Activated CD8-positive, alpha-beta memory T cell treated with anti-CD3 and anti-CD28 coated beads, Interleukin-2, amount 10 ng/mL, durations not matched to agents 7 days and 5 days (primary cell): ENCODE measurements at regions of chr11 and their contacts with region 1.

Region 1: DNA sequence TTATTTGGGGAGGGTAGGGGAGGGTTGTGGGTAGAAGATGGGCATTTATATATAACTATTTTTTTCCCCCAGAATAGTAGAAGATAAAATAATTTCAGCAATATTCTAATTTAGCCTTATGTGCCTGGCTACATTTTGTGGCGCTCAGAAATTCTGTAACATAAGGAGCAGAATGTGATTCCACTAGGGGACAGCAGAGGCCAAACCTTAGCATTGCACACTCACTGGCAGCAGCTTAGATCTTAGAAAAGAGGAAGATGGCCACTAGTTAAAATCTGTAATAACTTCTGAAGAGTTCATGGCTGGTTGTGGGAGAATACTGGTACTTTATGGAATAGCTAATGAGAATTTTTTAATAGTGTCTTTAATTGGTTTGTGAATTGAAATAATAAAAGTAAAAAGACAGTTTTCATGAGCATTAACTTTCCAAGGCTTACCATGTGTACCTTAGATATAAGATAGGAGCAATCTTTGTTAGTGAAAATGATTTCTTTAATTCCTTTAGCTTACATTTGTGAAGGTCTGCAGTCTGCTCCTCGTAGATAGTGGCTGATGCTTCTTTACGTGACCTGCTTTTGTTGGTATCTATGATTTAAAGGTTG is 33.1 kb downstream of the DDX10 start:
- DNase-seq: peak; percentile 61
- ATAC-seq: peak; percentile 71
- H3K4me3 Mint-ChIP-seq: no peak overlapping the region
- H3K27ac Mint-ChIP-seq: no peak overlapping the region
- H3K4me1 Mint-ChIP-seq: peaks cover 6% of the 10 kb centered on the region
- H3K27me3 Mint-ChIP-seq: no peaks in the 10 kb centered on the region

Region 2: DNA sequence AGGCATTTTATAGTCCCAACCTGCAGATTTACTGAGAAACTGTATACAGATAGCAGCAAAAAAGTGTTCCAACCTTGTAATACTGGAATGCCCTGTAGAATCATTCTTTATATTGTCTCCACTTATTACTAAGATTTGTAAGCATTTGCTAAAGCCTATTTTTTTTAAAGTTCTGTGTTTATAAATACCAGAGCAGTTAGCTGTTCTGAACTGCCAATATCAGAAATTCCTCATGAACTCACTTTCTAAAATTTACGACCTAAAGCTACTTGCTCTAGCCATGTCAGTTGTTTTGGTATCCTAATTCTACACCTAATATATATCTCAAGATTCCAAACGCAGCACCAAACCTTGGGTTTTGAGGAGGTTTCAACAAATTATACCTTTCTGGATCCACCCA is 333.8 kb before region 1 on chr11:
- CTCF ChIA-PET with region 1: no interaction called
- DNase-seq: no peak
- ATAC-seq: no peak
- H3K4me3 Mint-ChIP-seq: no peak overlapping the region
- H3K27ac Mint-ChIP-seq: no peak overlapping the region
- H3K4me1 Mint-ChIP-seq: no peaks in the 10 kb centered on the region
- H3K27me3 Mint-ChIP-seq: no peaks in the 10 kb centered on the region

Region 3: GRCh38 chr11:108733479-108734116 is 35.6 kb after region 1 on chr11:
- CTCF ChIA-PET with region 1: interaction called, 16 read pairs
- DNase-seq: peak; percentile 61
- ATAC-seq: peak; percentile 91
- H3K4me3 Mint-ChIP-seq: peak overlapping the region; percentile 48
- H3K27ac Mint-ChIP-seq: peak overlapping the region; percentile 74
- H3K4me1 Mint-ChIP-seq: peaks cover 43% of the 10 kb centered on the region
- H3K27me3 Mint-ChIP-seq: no peaks in the 10 kb centered on the region

Region 4: DNA sequence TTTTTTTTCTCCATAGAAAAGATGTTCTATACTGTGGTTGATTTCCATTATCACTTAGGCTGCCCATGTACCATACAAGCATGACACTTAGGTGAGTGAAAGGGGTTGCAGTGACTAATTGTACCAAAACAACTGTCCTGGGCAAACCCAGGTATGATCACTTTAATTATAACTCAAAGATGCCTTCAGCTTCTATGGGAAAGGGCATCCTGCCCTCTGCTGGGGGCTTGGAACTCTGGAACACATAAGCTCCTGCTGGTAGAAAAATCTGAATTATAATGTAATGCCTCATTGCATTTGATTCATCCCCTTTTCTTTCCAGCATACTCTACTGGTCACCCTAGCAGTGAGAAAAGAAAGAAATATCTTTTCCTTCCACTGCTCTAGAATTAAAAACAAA is 173.2 kb after region 1 on chr11:
- CTCF ChIA-PET with region 1: interaction called, 14 read pairs
- DNase-seq: peak; percentile 56
- ATAC-seq: no peak
- H3K4me3 Mint-ChIP-seq: no peak overlapping the region
- H3K27ac Mint-ChIP-seq: no peak overlapping the region
- H3K4me1 Mint-ChIP-seq: peaks cover 22% of the 10 kb centered on the region
- H3K27me3 Mint-ChIP-seq: no peaks in the 10 kb centered on the region